ENCODE measurements at regions of chr2 and their contacts with region 1.

Region 1: DNA sequence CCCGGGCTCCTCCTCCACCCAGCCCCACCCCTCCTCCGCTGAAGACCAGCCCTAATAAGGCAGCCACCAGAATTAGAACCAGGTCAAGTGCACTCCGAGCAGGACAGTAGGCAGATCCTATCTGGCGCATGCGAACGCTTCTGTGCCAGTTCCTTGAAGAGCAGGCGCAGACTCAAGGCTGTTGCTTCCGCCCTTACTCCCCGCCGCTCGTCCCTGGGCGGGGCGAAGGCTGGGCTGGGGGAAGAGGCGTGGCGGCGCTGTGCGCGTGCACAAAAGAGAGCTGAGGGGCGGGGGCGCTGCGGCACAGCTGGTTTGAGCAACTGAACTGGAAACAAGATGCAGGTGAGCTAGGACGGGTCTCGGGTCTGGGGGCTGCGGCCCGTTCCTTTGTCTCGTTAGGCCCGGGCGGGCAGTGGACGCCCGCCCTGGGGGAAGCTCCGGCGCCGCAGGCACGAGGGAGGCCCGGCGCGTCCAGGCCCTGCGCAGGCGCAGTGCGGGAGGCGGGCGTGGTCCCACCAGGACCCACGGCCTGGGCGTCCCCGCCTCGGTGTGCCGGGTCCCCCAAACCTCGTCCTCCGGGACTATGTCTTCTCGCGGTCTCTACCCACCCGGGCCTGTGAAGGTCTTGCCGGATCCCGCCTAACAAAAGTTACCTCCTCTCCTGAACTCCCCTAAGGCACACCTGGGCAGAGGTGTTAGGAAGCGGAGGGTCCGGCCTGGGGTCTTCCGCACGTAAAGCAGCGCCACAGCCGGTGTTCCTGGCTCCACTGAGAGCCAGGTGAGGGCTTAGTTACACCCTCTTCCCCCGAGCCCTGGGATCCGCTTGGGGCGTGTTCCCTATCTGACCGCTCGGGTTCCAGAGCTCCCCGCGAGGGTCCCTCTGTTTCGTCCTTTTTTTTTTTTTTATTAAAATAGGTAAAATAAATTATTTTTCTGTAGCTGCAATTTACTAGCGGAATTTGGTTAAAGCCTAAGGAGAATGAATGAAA is at the start of gene PDCL3:
- DNase-seq: peak; percentile 95
- H3K4me3 Mint-ChIP-seq: peak within 1 kb of the TSS; percentile 81
- H3K27ac Mint-ChIP-seq: peak within 1 kb of the TSS; percentile 99
- H3K4me1 Mint-ChIP-seq: peaks cover 52% of the 10 kb centered on the region
- H3K27me3 Mint-ChIP-seq: no peaks in the 10 kb centered on the region
- total RNA-seq, gene PDCL3: 34.2 to 38.9 TPM

Region 2: DNA sequence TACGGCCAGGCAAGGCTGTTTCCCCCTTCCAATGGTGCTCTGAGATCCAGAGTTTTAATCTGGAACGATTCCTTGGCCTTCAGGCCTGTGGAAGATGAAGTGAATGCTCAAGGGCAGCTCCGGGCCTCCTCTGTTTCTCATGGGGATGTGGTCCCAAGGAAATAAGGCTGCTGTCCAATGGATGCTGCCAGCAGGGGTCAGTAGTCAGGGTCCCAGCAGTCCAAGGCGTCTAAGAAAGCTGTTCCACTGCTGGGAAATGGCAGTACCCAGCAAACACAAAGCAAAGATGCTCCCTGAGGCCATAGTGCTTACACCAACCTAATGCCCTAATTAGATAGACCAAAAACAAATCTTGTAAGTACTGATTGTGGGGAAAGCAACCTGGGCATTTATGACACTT is 80.3 kb before region 1 on chr2:
- CTCF ChIA-PET with region 1: no interaction called
- POLR2A ChIA-PET with region 1: no interaction called
- DNase-seq: no peak
- H3K4me3 Mint-ChIP-seq: no peak overlapping the region
- H3K27ac Mint-ChIP-seq: no peak overlapping the region
- H3K4me1 Mint-ChIP-seq: no peaks in the 10 kb centered on the region
- H3K27me3 Mint-ChIP-seq: no peaks in the 10 kb centered on the region

Region 3: DNA sequence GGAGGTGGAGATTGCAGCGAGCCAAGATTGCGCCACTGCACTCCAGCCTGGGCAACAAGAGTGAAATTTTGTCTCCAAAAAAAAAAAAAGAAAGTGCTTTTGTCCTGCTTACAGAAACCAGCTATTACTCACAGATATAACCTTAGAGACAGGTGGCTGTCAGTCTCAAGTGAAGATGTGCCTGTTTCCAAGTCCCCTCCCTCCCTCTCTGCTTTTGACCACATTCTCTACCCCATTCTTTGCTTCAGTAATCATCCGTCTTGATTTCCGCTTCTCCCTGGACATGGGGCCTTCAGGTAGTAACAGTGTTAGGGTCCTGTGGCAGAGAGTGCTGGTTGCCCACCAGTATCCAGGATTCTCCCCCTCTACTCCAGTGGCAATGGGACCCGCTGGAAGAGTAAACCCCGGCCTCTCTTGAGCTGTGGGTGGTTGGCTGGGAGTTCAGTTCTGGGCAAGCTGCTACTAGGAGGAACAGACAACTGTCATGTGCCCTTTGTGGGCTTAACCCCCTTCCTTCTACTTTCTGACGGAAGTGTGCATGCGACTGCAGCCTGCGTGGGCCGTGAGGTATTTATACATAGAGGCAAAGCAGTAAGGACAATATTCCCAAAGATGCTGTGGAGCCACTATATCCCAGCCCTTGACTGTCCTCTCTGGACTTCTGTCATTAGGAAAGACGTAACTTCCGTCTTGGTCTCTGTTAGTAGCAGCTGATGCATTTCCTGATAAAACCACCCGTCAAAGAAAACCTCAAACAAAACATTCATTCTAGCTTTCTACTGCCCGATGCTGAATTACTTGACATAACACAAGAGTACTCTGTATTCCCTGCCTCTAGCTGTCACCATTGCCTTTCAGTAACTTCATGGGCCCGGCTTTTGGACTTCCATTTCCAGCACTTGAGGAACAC is 17.6 kb after region 1 on chr2:
- CTCF ChIA-PET with region 1: interaction called, 13 read pairs
- POLR2A ChIA-PET with region 1: interaction called, 4 read pairs
- DNase-seq: peak; percentile 65
- H3K4me3 Mint-ChIP-seq: peak overlapping the region; percentile 32
- H3K27ac Mint-ChIP-seq: peak overlapping the region; percentile 88
- H3K4me1 Mint-ChIP-seq: peaks cover 46% of the 10 kb centered on the region
- H3K27me3 Mint-ChIP-seq: no peaks in the 10 kb centered on the region